HEK293 (cell line): ENCODE measurements at regions of chr2 and their contacts with region 1.

Region 1: DNA sequence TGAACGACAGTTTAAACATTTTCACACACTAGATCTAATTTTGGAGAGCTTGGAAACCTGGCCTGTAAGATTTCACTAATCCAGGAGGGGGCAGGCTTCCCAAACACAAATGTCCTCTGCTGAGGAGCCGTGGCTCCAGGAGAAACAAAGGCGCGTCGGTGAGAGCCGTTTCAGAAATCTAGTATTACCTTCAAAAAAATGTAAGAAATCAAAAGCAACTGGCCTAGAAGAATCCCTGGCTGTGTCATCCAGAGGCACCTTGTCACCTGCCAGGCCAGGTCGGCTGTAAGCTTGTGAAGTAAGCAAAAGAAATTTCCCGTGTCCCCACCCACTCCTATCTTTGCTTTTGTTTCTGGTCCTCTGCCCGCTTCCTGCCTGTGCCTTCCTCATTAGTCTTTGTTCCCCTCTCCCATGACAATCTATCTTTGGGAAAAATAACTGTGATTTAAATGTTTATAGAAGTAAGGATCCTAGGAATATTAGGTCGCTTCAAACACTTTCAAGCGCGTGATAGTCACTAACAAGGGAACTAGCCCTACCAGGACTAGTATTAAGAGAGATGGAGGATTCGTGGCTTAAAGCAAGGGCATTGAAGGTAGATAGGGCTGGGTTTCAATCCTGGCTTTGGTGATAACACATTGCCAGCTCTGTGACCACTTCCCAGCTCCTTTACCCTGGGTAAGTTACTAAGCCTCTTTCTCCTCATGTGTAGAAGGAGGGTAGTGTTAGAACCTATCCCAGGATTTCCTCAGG is 99.5 kb upstream of the STK39 start:
- H3K4me3 ChIP-seq: peak overlapping the region; percentile 40
- H3K27ac ChIP-seq: no peak overlapping the region; the same call in 1 of the 2 replicates
- H3K4me1 ChIP-seq: no peaks in the 10 kb centered on the region
- CTCF ChIP-seq: peak; percentile 47

Region 2: DNA sequence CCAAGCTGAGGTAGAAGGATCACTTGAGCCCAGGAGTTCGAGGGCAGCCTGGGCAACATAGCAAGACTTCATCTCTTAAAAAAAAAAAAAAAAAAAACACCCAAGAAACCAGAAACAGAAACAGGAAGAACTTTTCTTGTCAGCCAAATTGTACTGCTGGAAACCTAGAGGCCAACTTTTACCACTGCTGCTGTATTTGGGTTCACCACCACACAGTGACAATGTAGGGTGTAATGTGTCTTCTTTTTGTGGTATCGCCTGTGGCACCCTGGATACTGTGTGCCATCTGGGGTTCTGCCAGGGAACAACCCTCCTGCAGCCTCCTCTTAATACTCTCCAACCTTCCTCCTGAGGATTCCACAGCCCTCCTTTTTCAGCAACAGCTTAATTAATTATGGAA is 172.1 kb before region 1 on chr2:
- CTCF ChIA-PET with region 1: no interaction called
- POLR2A ChIA-PET with region 1: no interaction called
- H3K4me3 ChIP-seq: no peak overlapping the region
- H3K27ac ChIP-seq: no peak overlapping the region
- H3K4me1 ChIP-seq: no peaks in the 10 kb centered on the region
- CTCF ChIP-seq: no peak

Region 3: DNA sequence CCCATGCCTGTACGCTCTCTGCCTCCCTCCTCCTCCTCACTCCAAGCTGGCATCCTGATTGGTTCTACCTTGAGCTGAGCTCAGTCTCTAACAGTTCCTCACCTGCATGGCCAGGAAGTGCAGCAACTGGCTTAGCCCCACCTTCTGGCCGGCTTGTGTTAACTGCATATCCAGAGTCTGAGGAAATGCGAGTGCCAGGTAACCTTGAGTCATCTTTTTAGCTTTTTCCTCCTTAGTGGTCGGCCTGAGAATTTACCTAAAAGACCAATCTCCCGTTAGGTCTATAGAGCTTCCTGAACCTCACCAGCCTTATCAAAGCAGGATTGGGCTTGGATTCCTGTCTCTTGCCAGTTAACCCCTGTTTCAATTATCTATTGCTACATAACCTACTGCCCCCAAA is 10.0 kb before region 1 on chr2:
- CTCF ChIA-PET with region 1: interaction called, 16 read pairs
- POLR2A ChIA-PET with region 1: no interaction called
- H3K4me3 ChIP-seq: no peak overlapping the region
- H3K27ac ChIP-seq: no peak overlapping the region
- H3K4me1 ChIP-seq: no peaks in the 10 kb centered on the region
- CTCF ChIP-seq: peak; percentile 40; the same call in 1 of the 2 replicates

Region 4: GRCh38 chr2:168357797-168358472 is 11.0 kb after region 1 on chr2:
- CTCF ChIA-PET with region 1: interaction called, 14 read pairs
- POLR2A ChIA-PET with region 1: no interaction called
- H3K4me3 ChIP-seq: no peak overlapping the region
- H3K27ac ChIP-seq: no peak overlapping the region
- H3K4me1 ChIP-seq: no peaks in the 10 kb centered on the region
- CTCF ChIP-seq: no peak

Region 5: GRCh38 chr2:168687314-168687713 is 340.4 kb after region 1 on chr2:
- CTCF ChIA-PET with region 1: interaction called, 24 read pairs
- POLR2A ChIA-PET with region 1: no interaction called
- H3K4me3 ChIP-seq: no peak overlapping the region
- H3K27ac ChIP-seq: no peak overlapping the region
- H3K4me1 ChIP-seq: no peaks in the 10 kb centered on the region
- CTCF ChIP-seq: peak; percentile 17; the same call in 1 of the 2 replicates

Region 6: DNA sequence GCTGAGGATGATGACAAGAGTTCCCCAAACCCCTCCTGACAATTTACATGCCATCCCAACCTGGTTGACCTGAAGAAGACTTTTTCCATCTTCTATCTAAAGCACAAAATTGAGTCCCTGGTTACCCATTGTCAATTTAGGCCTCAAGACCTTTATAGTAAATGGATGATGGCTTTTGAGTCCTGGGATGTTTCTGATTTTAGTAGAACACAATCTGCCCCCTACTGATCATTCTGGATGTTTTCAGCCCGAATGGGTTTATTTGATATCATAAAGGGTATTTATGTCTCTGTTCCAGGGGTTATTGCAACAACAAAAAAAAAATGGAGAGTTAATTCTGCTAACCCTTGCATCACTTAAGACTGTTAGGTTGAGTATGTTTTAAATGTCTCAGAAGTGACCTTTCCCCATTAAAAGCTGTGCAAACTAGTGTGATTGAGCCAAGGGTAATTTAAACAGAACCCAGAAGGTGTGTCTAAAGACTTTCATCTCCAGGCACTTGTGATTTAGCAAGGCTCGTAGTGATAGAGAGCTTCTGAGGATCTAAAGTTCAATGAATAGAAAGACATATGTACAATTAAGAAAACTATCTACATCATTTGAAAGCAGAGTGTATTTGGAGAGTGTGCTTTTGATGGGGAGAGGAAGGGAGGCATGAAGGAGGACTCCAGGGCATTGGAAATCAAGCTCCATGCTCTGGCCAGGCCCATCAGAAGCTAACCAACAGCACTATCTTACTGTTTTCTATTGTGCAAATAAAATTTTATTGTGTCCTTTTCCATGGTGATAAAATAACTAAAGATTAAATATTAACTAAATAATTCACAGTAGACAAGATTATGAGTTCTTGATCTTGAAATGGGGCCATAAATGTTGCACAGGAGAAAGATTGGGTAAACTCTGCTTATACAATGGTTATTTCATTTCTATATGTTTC is 358.9 kb after region 1 on chr2:
- CTCF ChIA-PET with region 1: interaction called, 14 read pairs
- POLR2A ChIA-PET with region 1: no interaction called
- H3K4me3 ChIP-seq: no peak overlapping the region
- H3K27ac ChIP-seq: no peak overlapping the region
- H3K4me1 ChIP-seq: no peaks in the 10 kb centered on the region
- CTCF ChIP-seq: no peak

Region 7: GRCh38 chr2:168920504-168921157 is 573.7 kb after region 1 on chr2:
- CTCF ChIA-PET with region 1: interaction called, 10 read pairs
- POLR2A ChIA-PET with region 1: no interaction called
- H3K4me3 ChIP-seq: no peak overlapping the region
- H3K27ac ChIP-seq: no peak overlapping the region
- H3K4me1 ChIP-seq: no peaks in the 10 kb centered on the region
- CTCF ChIP-seq: peak; percentile 28; the same call in 1 of the 2 replicates